WTC11 (cell line): ENCODE measurements at regions of chr10 and their contacts with region 1.

Region 1: GRCh38 chr10:129030996-129031843 is 435.8 kb upstream of the MGMT start:
- DNase-seq: peak; percentile 76
- ATAC-seq: peak; percentile 95
- H3K4me3 Mint-ChIP-seq: no peak overlapping the region
- H3K27ac Mint-ChIP-seq: no peak overlapping the region
- H3K4me1 Mint-ChIP-seq: peaks cover 41% of the 10 kb centered on the region
- H3K27me3 Mint-ChIP-seq: no peaks in the 10 kb centered on the region
- CTCF ChIP-seq: peak; percentile 81; the same call in 1 of the 2 replicates

Region 2: DNA sequence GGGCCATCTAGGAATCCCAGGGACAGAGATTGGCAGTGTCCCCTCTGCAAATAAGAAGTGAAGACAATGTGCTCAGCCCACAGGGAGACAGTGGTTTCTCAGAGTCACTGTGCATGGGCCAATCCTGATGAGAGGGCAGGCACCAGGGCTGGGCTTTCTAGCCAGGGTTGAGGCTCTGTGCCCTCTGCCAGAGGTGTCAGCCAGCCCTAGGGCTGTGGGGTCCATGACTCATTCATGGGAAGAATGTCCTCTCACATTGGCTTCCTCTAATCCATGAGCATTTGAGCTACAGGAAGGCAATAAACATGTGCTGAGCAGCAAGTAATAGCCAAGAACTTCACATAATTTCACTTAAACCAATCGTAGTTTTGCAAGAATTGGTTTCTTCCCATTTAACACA is 46.2 kb before region 1 on chr10:
- CTCF ChIA-PET with region 1: no interaction called
- POLR2A ChIA-PET with region 1: no interaction called
- DNase-seq: no peak
- ATAC-seq: no peak
- H3K4me3 Mint-ChIP-seq: no peak overlapping the region
- H3K27ac Mint-ChIP-seq: no peak overlapping the region
- H3K4me1 Mint-ChIP-seq: peaks cover 10% of the 10 kb centered on the region; the same call in 1 of the 2 replicates
- H3K27me3 Mint-ChIP-seq: no peaks in the 10 kb centered on the region
- CTCF ChIP-seq: no peak

Region 3: GRCh38 chr10:129332476-129332875 is 301.3 kb after region 1 on chr10:
- CTCF ChIA-PET with region 1: interaction called, 10 read pairs
- POLR2A ChIA-PET with region 1: no interaction called
- DNase-seq: peak; percentile 68
- ATAC-seq: peak; percentile 89
- H3K4me3 Mint-ChIP-seq: no peak overlapping the region
- H3K27ac Mint-ChIP-seq: peak overlapping the region; percentile 2; the same call in 1 of the 2 replicates
- H3K4me1 Mint-ChIP-seq: peaks cover 40% of the 10 kb centered on the region
- H3K27me3 Mint-ChIP-seq: no peaks in the 10 kb centered on the region
- CTCF ChIP-seq: 0 out of 2 replicates have a peak, but pooled peaks have one; percentile 28